SK-N-SH (cell line): ENCODE measurements at regions of chr11 and their contacts with region 1.

Region 1: DNA sequence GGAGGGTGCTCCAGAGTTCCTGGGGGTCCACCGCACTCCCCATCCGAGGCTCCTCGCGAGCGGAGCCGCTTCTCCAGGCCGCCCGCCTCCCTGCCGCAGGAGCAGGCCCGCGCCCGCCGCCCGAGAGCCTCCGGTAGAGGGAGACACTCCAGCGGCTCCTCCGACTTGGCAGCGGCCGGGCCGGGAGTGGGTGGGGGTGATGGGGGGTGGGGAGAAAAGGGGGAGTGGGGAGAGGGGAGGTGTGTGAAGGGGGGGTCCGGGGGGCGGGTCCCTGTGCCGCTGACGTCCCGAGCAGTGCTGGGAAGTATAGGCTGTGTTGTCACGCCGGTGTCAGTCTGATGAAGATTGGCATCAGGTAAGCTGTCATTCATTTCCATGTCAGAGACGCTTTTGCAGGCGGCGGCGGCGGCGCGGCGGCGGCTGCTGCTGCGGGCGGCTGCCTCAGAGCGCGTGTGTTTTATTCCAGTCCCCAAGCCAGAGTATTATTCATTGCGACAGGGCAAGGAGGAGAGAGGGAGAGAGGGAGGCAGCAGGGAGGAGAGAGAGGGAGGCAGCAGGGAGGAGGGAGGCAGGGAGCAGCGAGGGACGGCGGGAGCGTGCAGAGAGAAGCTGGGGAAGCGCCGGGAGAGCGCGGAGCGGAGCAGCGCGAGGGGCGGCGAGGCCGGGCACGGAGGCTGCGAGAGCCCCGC is at the start of gene PKNOX2:
- DNase-seq: peak; percentile 95
- H3K4me3 ChIP-seq: peak within 1 kb of the TSS; percentile 52 to 71
- H3K27ac ChIP-seq: no peak within 1 kb of the TSS
- H3K4me1 ChIP-seq: peaks cover 0 to 7% of the 10 kb centered on the region in 2 experiments; a peak in 1 of 4 replicates
- H3K27me3 ChIP-seq: peaks cover 6% of the 10 kb centered on the region
- CTCF ChIP-seq: peak; percentile 56
- EP300 ChIP-seq: no peak
- RAD21 ChIP-seq: peak; percentile 50
- polyA plus RNA-seq, gene PKNOX2: 0.02 TPM in 1 of 2 replicates, not detected in the other

Region 2: DNA sequence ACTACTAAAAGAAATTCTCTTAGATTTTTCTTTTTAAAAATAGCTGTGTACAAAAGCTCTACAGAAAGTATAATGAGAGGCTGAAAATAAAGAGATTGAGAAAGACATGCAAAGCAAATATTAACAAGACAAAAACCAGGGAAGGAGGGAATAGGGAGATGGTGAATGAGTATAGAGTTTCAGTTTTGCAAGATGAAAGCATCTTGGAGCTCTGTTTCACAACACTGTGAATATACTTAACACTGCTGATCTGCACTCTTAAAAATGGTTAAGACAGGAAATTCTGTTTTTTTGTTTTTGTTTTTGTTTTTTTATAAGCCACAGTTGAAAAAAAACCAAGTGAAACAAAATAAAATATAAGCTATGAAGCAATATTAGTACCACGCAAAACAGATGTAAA is 58.6 kb before region 1 on chr11:
- CTCF ChIA-PET with region 1: no interaction called
- POLR2A ChIA-PET with region 1: no interaction called
- DNase-seq: no peak
- H3K4me3 ChIP-seq: no peak overlapping the region
- H3K27ac ChIP-seq: no peak overlapping the region
- H3K4me1 ChIP-seq: peaks cover 0 to 3% of the 10 kb centered on the region in 2 experiments; a peak in 2 of 4 replicates
- H3K27me3 ChIP-seq: no peaks in the 10 kb centered on the region
- CTCF ChIP-seq: no peak
- EP300 ChIP-seq: no peak
- RAD21 ChIP-seq: no peak

Region 3: DNA sequence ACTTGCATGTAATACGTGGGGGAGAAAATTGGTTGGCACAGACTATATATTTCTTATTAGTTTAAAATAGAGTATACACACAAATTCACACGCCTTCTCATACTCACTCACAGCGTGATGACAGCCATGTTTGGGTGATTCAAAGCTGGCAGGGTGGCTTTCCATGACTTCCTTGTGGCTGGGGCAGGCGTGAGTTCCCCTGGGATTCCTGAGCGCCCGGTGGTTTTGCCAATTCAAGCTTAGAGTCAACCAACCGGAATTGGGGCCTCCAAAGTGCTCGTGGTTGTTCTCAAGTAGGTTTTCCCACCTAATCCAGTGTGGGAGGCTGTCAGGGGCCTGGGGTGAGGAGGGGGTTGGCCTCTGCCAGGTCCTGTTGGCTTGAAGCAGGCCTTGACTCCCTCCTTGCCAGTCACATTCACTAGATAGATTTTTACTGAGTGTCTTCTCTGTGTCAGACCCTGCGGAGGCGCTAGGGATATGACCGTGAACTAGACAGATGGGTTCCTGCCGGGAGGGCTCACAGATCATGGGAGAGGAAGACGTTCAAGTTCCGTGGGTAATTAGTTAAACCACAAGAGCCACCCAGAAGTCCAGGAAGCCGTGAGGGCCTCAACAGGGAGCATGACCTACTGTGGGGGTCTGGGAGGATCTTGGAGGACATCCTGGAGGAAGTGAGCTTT is 11.5 kb after region 1 on chr11:
- CTCF ChIA-PET with region 1: interaction called, 33 read pairs
- POLR2A ChIA-PET with region 1: no interaction called
- DNase-seq: no peak
- H3K4me3 ChIP-seq: no peak overlapping the region
- H3K27ac ChIP-seq: no peak overlapping the region
- H3K4me1 ChIP-seq: no peaks in the 10 kb centered on the region
- H3K27me3 ChIP-seq: no peaks in the 10 kb centered on the region; the same call in none of the 2 replicates
- CTCF ChIP-seq: no peak
- EP300 ChIP-seq: no peak
- RAD21 ChIP-seq: no peak

Region 4: DNA sequence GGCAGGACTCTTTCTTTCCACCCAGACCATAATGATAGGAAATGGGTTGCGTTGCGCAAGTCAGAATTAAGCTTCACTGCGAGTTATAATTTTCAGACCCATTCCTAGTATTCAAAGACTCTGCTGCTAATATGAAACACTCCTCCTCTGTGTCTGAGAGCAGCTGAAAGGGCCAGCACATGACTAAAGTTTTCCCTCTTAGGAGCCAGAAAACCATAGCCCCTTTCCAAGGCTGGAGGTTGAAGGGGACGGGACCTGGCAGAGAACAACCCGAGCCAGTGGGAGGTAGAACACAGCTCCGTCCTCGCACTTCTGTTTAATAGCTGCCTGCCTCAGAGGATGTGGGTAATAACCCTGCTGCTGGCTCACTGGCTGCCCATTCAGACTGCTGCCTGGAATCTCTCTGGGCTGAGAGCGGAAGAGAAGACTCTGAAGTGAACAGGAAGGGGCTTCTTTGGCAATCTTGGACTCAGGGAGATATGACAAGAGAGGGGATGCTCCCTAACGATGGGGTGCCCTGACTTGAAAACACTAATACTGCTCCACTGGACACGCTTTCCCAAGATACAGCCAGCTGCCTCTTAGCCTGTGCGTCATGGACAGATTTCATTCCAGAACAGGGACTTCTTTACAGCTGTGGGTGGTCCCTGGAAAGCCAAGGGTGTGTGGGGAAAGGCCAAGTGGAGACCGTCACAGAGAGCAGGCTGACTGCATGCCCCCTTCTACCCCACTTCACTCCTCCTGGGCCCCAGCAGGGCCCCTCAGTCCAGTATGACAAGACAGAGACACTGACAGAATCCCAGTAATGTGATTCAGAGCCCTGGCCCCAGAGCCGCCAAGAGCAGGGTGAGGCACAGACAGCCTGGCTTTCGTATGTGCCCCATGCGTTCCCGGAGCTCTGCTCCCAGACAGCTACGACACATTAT is 174.6 kb after region 1 on chr11:
- CTCF ChIA-PET with region 1: interaction called, 66 read pairs
- POLR2A ChIA-PET with region 1: no interaction called
- DNase-seq: peak; percentile 61
- H3K4me3 ChIP-seq: no peak overlapping the region
- H3K27ac ChIP-seq: no peak overlapping the region
- H3K4me1 ChIP-seq: peaks cover 0 to 16% of the 10 kb centered on the region in 2 experiments; a peak in 2 of 4 replicates
- H3K27me3 ChIP-seq: no peaks in the 10 kb centered on the region; the same call in 1 of the 2 replicates
- CTCF ChIP-seq: no peak
- EP300 ChIP-seq: no peak
- RAD21 ChIP-seq: no peak